ENCODE measurements at regions of chr16 and their contacts with region 1.

Region 1: GRCh38 chr16:46583036-46583435 is 38.1 kb downstream of the SHCBP1 start:
- DNase-seq: peak in 1 of 4 experiments; percentile 11
- ATAC-seq: no peak; the same call in 2 of the 3 replicates
- H3K4me3 ChIP-seq: no peak overlapping the region
- H3K27ac ChIP-seq: no peak overlapping the region
- H3K4me1 ChIP-seq: peaks cover 3 to 21% of the 10 kb centered on the region in 2 experiments; a peak in 4 of 5 replicates
- H3K27me3 ChIP-seq: no peaks in the 10 kb centered on the region
- CTCF ChIP-seq: no peak
- EP300 ChIP-seq: no peak; the same call in 1 of the 2 replicates
- POLR2A ChIP-seq: no peak
- RAD21 ChIP-seq: no peak

Region 2: DNA sequence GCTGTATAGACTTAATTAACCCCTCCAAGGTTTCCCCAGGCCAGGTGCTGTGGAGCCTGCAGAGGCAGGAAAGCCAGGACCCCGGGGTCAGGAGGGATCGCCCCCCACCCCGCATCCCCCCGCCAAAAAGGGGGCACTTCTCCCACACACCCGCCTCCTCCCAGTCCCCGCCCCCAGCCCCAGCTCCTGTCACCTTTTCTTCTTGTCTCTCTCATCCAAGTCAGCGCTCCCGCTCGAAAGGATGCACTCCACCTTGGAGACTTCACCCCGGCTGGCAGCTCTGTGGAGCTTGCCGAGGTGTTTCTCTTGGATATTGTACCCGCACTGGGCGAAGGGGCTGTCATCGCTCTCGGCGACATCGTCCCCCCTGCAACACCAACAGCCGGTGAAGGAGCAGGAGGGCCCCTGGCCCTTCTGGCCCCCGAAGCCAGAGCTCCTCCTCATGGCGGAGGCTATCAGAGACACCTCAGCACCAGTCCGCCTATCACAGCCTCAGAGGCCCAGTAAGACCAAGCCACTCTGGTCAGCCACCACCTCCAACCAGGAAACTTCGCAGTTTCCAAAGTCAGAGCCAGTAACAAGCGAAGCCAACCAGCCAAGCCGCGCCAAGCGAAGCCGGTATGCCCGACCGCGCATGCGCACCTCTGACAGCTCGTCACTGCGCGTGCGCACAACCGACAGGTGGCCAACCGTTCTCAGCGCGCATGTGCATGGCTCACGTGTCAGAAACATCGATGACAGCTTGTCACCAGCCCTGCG is 14.4 kb before region 1 on chr16:
- CTCF ChIA-PET with region 1: no interaction called
- POLR2A ChIA-PET with region 1: interaction called, 18 read pairs
- in situ Hi-C with region 1: no loop called
- intact Hi-C with region 1: no loop called
- DNase-seq: no peak
- ATAC-seq: no peak; the same call in none of the 3 replicates
- H3K4me3 ChIP-seq: no peak overlapping the region
- H3K27ac ChIP-seq: no peak overlapping the region
- H3K4me1 ChIP-seq: peaks cover 5 to 14% of the 10 kb centered on the region in 2 experiments; a peak in 4 of 5 replicates
- H3K27me3 ChIP-seq: peaks cover 11 to 32% of the 10 kb centered on the region in 2 experiments; a peak in 3 of 5 replicates
- CTCF ChIP-seq: no peak
- EP300 ChIP-seq: no peak
- POLR2A ChIP-seq: no peak
- RAD21 ChIP-seq: no peak